ENCODE measurements at regions of chr11 and their contacts with region 1.

Region 1: DNA sequence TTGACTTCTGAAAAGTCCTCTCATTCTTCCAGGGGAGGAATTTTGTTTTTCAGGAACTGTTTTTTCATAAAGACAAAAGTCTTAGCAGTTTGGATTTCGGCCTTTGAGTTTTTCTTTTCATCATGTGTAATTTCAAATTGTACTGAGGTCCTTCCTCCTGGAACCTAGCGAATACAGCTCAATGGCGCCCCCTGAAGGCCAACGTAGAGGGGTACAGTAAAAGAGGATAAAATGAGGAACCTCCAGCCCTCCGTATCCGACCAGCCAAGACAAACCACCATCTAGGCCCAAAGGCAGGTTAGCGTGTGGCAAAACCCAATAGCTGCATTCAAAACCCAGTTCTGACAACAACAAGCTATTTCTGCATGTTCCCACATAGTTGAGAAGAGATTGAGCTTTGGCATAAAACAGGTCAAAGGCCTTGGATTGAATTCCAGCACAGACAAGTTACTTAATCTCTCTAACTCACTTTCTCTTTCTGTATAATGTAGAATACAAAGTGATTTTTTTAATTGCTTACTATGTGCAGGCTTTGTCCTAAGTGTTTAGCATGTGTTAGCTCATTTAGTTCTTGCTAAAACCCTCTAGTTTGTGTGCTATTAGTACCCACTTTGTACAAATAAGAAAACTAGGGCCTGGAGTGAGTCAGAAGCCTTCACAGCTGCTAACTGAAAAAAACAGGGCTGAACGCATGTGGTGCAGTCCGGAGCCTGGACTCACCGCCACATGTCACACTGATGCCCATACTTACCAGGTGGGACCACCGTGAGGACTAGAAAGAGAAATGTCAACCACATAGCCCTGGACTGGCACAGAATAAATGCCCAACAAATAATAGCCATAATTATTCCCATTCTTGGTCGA is 43.2 kb upstream of the ETS1 start:
- DNase-seq: peak; percentile 91
- ATAC-seq: peak; percentile 84 to 93 (median 90)
- H3K4me3 ChIP-seq: peak overlapping the region in 1 of 10 donors; percentile 15
- H3K27ac ChIP-seq: peak overlapping the region in 4 of 10 donors; percentile 26 to 82 (median 44)
- H3K4me1 ChIP-seq: peaks cover 0 to 51% (median 15%) of the 10 kb centered on the region in 9 donors
- H3K27me3 ChIP-seq: no peaks in the 10 kb centered on the region
- CTCF ChIP-seq: peak; percentile 76 to 94 (median 89)

Region 2: GRCh38 chr11:128164080-128164741 is 466.4 kb before region 1 on chr11:
- intact Hi-C with region 1: loop called in 1 of 10 experiments (anchors 5 kb)
- DNase-seq: no peak
- ATAC-seq: no peak
- H3K4me3 ChIP-seq: no peak overlapping the region
- H3K27ac ChIP-seq: no peak overlapping the region
- H3K4me1 ChIP-seq: peaks cover 0 to 5% (median 0%) of the 10 kb centered on the region in 9 donors
- H3K27me3 ChIP-seq: peaks cover 0 to 5% (median 0%) of the 10 kb centered on the region in 7 donors
- CTCF ChIP-seq: no peak

Region 3: DNA sequence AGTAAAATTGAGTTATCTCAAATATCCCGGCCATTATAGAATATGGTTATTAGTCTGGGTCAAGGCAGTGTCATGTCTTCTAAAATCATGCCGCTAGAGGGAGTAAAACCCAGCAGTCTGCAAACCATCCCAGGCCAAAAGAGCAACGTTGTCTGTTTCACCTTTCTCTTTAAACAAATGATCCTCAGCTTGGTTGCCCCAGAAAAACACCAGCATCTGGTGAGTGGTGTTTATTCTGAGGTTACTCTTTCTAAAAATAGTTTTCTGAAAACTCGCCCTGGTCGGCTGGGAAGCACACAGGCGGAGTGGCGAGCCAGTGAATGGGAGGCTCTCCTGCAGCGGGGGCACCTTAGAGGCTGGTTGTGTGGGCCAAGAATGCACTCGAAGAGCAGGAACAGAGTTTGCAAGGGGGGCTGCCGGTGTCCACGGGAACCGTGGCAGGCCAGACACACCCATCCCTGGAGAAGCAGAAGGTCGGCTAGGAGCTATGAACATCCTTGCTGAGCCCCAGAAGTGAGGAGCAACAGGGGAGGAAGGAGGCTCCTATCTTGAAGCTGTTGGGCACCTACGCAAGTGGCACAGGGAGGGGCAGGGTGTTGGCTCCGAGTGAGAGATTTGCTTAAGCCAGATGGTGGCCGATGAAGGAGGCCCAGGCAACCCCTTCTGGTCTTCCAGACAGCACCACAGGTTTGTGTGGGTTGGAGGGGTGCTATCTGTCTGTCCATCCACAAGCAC is 340.3 kb before region 1 on chr11:
- intact Hi-C with region 1: loop called (anchors 1 to 5 kb)
- DNase-seq: peak; percentile 29 to 76
- ATAC-seq: peak; percentile 81 to 91 (median 89)
- H3K4me3 ChIP-seq: peak overlapping the region in 7 of 10 donors; percentile 17 to 43 (median 29)
- H3K27ac ChIP-seq: peak overlapping the region in 9 of 10 donors; percentile 24 to 83 (median 65)
- H3K4me1 ChIP-seq: peaks cover 2 to 53% (median 39%) of the 10 kb centered on the region in 9 donors
- H3K27me3 ChIP-seq: no peaks in the 10 kb centered on the region
- CTCF ChIP-seq: peak; percentile 81 to 94 (median 88)

Region 4: DNA sequence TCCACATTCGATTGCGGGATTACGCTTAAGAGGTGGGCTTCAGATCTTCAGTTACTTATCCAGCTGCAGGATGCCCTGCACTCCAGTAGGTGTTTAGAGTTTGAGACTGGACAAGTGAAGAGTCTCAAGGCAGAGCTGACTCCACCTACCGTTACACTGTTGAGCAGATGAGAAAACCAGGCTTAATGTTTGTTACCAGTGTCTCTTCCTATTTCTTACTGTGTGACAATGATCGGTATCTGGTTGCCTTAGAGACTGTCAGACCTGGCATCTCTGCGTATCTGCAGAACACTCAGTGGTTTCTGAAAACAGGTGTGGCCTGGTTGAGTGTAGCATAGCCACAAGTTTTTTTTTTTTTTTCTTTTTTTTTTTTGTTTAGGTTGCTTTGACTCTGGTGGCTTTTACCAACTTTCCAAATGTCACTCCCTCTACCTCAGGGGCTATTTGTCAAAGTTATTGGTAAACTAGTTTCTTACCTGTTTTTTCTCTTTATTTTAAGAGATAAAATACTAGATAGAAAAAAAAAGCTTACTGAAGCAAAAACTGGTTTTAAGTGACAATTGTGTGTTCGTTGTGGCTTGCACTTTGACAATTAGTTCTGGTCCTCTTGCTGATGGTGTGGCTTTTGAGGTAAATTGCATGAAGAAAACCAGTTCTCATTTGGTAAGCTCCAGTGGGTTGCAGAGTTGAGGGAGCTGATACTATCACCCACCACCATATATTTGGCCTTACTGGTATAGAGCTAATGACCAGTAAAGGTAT is 328.0 kb before region 1 on chr11:
- intact Hi-C with region 1: no loop called
- DNase-seq: no peak
- ATAC-seq: peak in 5 of 8 donors; percentile 26 to 67 (median 56)
- H3K4me3 ChIP-seq: peak overlapping the region in 1 of 10 donors; percentile 26
- H3K27ac ChIP-seq: peak overlapping the region in 2 of 10 donors; percentile 31 to 81
- H3K4me1 ChIP-seq: peaks cover 4 to 54% (median 24%) of the 10 kb centered on the region in 9 donors
- H3K27me3 ChIP-seq: no peaks in the 10 kb centered on the region
- CTCF ChIP-seq: no peak

Region 5: GRCh38 chr11:128482512-128483191 is 147.9 kb before region 1 on chr11:
- intact Hi-C with region 1: loop called in 2 of 10 experiments (anchors 5 kb)
- DNase-seq: no peak
- ATAC-seq: peak; percentile 19 to 50 (median 26)
- H3K4me3 ChIP-seq: peak overlapping the region in 2 of 10 donors; percentile 10 to 14
- H3K27ac ChIP-seq: peak overlapping the region; percentile 19 to 79 (median 66)
- H3K4me1 ChIP-seq: peaks cover 9 to 97% (median 83%) of the 10 kb centered on the region in 9 donors
- H3K27me3 ChIP-seq: no peaks in the 10 kb centered on the region
- CTCF ChIP-seq: no peak

Region 6: DNA sequence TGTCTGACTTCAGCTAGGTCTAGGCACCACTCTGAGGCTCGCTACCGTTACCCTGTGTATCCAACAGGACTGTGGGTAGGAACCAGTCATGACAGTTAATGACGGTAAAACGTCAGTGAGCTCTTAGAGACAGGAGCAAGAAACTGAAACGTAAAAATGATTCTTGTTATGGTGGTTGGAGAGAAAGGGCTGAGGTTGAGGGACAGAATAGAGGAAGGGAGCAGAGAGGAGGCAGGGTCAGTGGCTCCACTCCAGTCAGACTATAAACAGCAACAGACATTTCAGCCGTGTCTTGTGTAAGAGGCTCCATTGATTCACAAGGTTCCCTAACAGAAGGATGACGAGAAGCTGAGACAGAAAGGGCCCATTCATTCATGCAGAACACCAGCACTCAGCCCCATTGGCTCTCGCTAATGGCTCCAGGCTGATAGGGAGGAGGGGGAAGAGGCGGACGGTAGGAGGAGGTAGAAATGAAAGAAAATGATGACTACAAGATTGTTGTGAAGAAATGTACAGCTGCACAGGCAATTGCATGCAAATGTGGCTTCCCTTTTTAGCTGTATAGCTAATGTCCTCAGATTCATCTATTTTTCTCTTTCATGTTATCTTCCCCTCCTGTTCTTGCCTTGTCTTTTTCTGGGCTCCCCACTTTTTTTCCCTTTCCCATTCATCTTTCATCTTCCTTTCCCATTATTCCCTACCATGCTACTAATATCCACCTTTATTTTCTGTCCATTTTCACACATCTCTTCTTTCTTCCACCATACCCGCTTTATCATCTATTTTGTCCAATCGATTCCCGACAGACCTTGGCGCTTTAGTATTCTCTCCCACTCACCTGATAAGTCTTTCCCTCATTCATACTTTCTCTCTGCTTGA is 77.6 kb before region 1 on chr11:
- intact Hi-C with region 1: loop called in 5 of 10 experiments (anchors 2 to 5 kb)
- DNase-seq: no peak
- ATAC-seq: peak in 3 of 8 donors; percentile 2 to 54 (median 23)
- H3K4me3 ChIP-seq: no peak overlapping the region
- H3K27ac ChIP-seq: peak overlapping the region in 7 of 10 donors; percentile 34 to 85 (median 50)
- H3K4me1 ChIP-seq: peaks cover 3 to 76% (median 56%) of the 10 kb centered on the region in 9 donors
- H3K27me3 ChIP-seq: no peaks in the 10 kb centered on the region
- CTCF ChIP-seq: no peak

Region 7: DNA sequence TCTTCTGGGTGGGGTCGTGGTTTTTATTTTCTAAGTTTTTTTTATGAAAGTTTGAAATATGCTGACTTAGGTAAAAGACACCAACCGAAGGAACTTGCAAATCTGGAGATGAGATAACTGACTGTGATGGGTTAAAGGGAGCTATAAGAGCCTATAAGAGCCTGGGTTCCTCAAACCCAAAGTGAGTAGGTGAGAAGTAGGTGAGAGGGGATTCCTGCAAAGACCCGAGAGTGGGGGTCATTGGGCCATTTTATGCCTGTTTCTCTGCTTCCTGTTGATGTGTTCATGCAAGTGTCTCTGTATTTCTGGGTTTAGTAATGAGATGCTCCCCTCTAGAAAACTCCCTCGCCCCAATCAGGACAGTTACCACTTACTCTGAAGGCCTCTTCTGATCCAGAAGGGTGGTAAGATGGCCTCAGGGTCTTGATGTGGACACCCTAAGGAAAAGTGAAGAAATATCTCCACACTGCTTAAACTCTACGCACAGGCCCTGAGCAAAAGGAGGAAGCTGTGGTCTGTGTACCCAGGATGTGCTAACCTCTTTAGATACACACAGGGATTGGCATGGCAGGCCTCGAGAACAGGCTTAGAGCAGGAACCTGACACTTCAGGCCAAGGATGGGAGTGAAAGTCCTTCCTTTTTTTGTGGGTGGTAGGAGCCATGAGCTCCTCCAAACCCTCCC is 65.1 kb after region 1 on chr11:
- intact Hi-C with region 1: no loop called
- DNase-seq: no peak
- ATAC-seq: peak in 4 of 8 donors; percentile 6 to 46 (median 40)
- H3K4me3 ChIP-seq: peak overlapping the region; percentile 72 to 92 (median 87)
- H3K27ac ChIP-seq: peak overlapping the region; percentile 86 to 99 (median 95)
- H3K4me1 ChIP-seq: peaks cover 2 to 83% (median 30%) of the 10 kb centered on the region in 9 donors
- H3K27me3 ChIP-seq: peaks cover 0 to 15% (median 3%) of the 10 kb centered on the region in 7 donors
- CTCF ChIP-seq: no peak

Region 8: GRCh38 chr11:128824191-128825049 is 193.8 kb after region 1 on chr11:
- intact Hi-C with region 1: loop called in 1 of 10 experiments (anchors 5 kb)
- DNase-seq: no peak
- ATAC-seq: peak; percentile 38 to 86 (median 56)
- H3K4me3 ChIP-seq: peak overlapping the region in 8 of 10 donors; percentile 12 to 36 (median 26)
- H3K27ac ChIP-seq: peak overlapping the region in 6 of 10 donors; percentile 37 to 72 (median 54)
- H3K4me1 ChIP-seq: peaks cover 0 to 22% (median 6%) of the 10 kb centered on the region in 9 donors
- H3K27me3 ChIP-seq: peaks cover 0 to 11% (median 0%) of the 10 kb centered on the region in 7 donors
- CTCF ChIP-seq: no peak